ENCODE measurements at regions of chr17 and their contacts with region 1.

Region 1: DNA sequence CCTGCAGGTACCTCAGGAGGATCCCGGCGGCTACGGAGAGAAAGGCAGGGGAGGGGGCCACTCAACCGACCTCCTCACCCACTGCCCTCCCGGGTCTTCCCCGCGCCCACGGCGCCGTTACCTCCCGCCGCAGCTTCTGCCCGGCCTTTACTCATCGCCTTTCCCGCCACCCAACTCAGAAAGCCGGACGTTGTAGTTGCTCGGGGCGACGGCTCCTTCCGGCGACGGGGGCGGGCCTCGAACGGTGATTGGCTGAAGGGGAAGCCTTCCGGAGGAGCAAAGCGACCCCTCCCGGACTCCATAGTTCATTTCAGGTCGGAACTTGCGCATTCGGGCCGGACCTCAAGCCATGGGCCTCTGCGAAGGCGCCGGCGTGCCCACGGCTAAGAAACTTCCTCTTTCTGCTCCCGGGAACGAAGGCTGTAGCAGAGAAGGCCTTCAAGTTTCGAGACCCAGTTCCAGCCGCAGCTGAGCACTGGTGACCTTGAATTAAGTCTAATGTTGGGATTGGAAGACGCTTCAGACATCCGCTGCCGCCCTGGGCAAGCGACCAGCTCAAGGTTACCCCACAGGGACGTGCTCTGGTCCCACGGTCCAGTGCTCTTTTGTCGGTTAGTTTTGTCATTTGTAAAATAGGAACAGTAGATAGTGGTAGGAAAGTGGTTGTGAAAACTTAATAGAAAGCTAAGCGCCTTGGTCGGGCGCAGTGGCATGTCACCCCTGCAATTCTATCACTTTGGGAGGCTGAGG is at the start of gene PSMC3IP:
- DNase-seq: peak; percentile 98
- CTCF ChIP-seq: peak; percentile 36

Region 2: GRCh38 chr17:42484304-42484703 is 93.4 kb before region 1 on chr17:
- CTCF ChIA-PET with region 1: no interaction called
- POLR2A ChIA-PET with region 1: no interaction called
- DNase-seq: no peak
- CTCF ChIP-seq: no peak

Region 3: GRCh38 chr17:42598905-42599304 is 21.2 kb after region 1 on chr17:
- CTCF ChIA-PET with region 1: interaction called, 120 read pairs
- POLR2A ChIA-PET with region 1: no interaction called
- DNase-seq: no peak
- CTCF ChIP-seq: no peak

Region 4: DNA sequence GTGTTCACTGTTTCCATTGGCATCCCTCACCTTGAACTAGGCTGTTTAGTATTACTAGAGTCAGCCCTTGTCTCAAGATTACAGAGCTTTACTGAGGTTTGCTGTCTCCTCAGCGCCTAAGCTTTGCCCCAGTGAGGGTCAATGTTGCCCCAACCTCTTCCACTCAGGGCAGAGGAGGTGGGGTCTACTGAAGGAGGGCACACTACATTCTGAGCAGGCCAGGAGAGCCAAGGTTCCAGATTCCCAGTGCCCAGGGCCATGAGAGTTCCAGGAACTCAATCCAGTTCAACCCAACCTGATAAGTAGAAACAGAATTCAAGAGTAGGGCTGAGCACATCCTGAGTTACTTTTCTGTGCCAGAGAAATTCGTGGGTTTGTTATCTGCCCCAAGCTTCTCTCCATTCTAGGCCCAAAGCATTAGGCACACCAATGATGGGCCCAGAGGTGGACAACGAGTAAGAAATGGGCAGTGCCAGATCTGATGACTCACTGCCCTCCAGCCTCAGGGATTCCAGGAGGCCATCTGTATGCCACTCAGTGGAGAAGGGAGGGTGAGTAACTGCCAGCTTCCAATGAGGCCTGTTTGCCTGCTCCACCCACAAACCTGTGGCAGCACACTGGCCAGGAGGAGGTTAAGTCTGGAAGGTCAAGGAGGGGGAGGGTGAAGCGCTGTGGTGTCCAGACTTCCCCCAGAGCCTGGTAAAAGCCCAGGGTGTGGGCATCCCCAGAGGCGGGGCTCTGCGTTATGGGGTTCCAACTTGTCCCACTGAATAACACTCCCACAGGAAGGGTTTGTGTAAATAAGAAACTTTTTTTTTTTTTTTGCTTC is 89.6 kb after region 1 on chr17:
- CTCF ChIA-PET with region 1: interaction called, 14 read pairs
- POLR2A ChIA-PET with region 1: no interaction called
- DNase-seq: no peak
- CTCF ChIP-seq: no peak

Region 5: GRCh38 chr17:42704837-42705494 is 127.3 kb after region 1 on chr17:
- CTCF ChIA-PET with region 1: interaction called, 17 read pairs
- POLR2A ChIA-PET with region 1: no interaction called
- DNase-seq: peak; percentile 76
- CTCF ChIP-seq: no peak

Region 6: DNA sequence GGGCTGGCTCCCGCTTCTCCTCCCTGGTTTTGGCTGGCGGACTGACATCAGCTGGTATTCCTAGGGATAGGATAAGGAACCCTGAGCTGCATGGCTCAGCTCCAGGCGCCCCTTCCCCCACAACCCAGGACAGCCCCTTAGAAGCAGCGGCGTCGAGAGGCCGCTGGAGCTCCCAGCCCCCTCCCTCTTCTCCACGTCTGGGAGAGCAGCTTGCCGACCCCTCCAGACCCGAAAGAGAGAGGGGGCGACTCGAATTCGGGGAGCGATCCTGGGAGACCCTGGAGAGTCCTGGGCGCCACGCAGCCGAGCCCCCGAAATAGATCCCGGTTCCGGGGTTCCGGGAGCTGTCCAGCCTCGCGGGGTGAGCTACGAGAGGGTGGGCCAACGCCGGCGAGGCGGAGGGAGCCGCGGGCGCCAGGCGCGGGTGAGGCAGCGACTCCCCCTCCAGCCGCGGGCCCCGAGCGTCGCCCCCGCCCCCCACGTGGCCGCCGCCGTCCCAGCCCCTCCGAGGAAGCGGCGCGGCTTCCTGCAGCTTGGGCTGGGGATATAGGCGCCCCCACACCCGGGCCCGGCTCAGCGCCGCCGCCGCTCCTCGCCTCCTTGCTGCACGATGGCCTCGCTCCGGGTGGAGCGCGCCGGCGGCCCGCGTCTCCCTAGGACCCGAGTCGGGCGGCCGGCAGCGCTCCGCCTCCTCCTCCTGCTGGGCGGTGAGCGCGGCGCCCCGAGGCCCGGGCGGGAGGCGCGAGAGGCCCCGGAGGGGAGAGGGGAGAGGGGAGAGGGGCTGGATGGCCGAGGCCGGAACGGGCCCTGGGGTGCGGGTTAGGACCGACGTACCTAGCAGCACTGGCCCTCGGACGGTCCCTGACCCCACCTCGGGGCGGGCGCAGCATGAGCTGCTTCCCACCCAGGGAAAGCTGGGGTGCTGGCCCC is 183.2 kb after region 1 on chr17 and contains the start of gene RAMP2:
- CTCF ChIA-PET with region 1: interaction called, 109 read pairs
- POLR2A ChIA-PET with region 1: interaction called, 7 read pairs
- DNase-seq: peak; percentile 40
- CTCF ChIP-seq: no peak

Measured in GM10248 (cell line).